ENCODE measurements at regions of chr12 and their contacts with region 1.

Region 1: DNA sequence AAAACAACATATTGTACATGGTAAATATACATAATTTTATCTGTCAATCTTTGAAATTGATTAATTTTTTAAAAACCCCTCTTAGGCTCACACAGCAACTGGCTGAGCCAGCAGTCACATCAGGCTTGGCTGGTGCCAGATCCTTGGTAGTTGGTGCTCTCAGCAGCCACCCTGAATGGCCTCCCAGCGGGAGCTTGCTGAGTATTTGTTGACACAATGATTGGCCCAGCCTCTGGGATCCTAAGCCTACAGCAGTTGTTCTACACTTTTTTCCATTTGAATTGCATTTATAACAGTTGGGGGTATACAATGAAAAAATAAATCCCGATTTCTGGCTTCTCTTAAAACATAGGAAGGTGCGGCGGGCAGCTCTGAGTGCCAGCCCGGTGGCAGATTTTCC is 11.1 kb downstream of the PRKAB1 start:
- DNase-seq: no peak
- H3K4me3 Mint-ChIP-seq: no peak overlapping the region
- H3K27ac Mint-ChIP-seq: peak overlapping the region; percentile 38
- H3K4me1 Mint-ChIP-seq: peaks cover 42% of the 10 kb centered on the region
- H3K27me3 Mint-ChIP-seq: no peaks in the 10 kb centered on the region
- CTCF ChIP-seq: no peak

Region 2: DNA sequence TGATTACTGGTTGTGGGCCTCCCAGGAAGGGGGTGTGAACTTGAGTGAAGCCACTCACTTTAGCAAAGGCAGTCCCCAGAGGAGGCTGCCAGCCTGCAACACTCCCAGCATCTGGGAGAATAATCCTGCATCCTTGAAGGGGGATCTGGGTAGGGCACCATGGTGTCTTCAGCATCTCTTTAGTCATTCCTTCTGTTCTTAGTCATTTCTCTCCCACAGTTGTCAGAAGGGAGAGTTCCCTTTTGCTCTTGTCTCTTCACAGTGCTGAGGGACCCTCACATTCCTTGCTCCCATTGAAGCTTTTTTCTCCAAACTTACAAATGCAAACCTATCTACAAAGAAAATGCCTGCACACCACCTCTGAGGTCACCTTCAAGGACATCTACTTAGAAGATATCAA is 246.2 kb after region 1 on chr12:
- CTCF ChIA-PET with region 1: interaction called, 10 read pairs
- intact Hi-C with region 1: no loop called
- DNase-seq: no peak
- H3K4me3 Mint-ChIP-seq: no peak overlapping the region
- H3K27ac Mint-ChIP-seq: no peak overlapping the region
- H3K4me1 Mint-ChIP-seq: no peaks in the 10 kb centered on the region
- H3K27me3 Mint-ChIP-seq: peaks cover 29% of the 10 kb centered on the region
- CTCF ChIP-seq: no peak

Measured in Calu3 (cell line).